Activated CD4-positive, alpha-beta memory T cell treated with anti-CD3 and anti-CD28 coated beads, Interleukin-2, amount 10 ng/mL, durations not matched to agents 7 days and 5 days (primary cell): ENCODE measurements at regions of chr19 and their contacts with region 1.

Region 1: DNA sequence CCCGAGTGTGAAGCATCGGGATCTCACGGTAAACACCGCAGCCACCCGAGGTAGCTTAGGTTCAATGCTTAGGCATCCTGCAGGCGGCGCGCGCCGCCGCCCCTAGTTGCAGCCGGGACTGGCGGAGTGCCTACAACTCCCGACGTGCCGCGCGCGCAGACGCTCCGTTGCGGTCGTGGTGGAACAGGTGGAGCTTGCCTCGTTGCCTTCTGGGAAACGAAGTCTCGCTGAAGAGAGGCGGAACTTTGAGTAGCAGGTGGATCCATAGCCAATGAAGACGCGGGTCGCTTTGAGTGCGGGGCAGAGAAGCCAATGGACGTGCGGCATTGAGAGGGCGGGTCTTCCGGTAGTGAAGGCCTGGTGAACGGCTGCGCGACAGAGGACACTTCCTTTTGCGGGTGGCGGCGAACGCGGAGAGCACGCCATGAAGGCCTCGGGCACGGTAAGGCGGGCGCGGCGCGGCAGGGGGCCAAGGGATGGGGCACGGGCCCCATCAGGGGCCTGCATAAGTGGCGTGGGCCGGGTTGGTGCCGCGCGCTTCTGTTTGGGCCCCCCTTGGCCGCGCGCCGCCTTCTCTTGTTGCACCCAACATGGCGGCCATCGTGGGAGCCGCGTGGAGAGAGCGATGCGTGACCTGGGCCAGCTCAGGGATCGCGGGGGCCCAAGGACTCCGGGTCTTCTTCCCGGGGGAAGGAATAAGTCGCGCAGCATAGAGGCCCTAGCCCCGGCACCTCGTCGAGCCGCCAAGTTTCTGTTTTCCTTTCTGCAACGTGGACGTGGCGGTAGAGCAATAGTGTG is at the start of gene RPL18A:
- DNase-seq: peak; percentile 100
- H3K4me3 Mint-ChIP-seq: peak within 1 kb of the TSS; percentile 95
- H3K27ac Mint-ChIP-seq: peak within 1 kb of the TSS; percentile 93
- H3K4me1 Mint-ChIP-seq: peaks cover 42% of the 10 kb centered on the region
- H3K27me3 Mint-ChIP-seq: no peaks in the 10 kb centered on the region
- total RNA-seq, gene RPL18A: 2,013 to 2,059 TPM

Region 2: DNA sequence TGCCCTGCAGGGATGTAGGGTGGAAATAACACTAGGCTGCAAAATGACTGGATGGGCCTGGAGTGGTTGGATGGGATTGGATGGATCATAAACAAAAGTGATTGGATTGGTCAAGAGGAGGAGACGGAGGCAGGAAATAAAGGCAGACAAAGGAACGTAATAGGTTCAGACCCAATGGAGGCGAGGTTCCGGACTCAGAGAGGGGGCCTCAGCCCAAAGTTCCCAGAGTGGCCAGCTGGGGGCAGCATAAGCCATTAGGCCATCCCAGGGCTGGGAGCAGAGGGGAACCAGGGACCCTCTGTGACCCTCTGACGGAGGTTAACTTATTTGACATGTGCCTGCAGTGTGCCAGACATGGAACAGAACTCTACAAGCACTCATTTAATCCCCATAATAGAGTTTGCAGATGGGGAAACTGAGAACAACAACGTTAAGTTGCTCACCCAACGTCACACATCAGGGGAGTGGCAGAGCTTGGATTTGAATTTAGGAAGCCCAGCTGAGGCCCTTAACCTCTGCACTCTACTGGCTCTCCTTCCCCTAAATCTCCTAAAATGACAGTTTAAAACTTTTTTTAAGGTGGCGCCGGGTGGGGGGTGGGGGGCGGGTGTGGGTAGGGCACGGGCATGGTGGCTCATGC is 155.8 kb before region 1 on chr19:
- CTCF ChIA-PET with region 1: interaction called, 41 read pairs
- POLR2A ChIA-PET with region 1: no interaction called
- DNase-seq: peak; percentile 74
- H3K4me3 Mint-ChIP-seq: no peak overlapping the region
- H3K27ac Mint-ChIP-seq: no peak overlapping the region
- H3K4me1 Mint-ChIP-seq: no peaks in the 10 kb centered on the region
- H3K27me3 Mint-ChIP-seq: peaks cover 7% of the 10 kb centered on the region

Region 3: GRCh38 chr19:17751103-17751911 is 108.4 kb before region 1 on chr19 and contains the start of gene FCHO1:
- CTCF ChIA-PET with region 1: interaction called, 12 read pairs
- POLR2A ChIA-PET with region 1: interaction called, 7 read pairs
- DNase-seq: peak; percentile 93
- H3K4me3 Mint-ChIP-seq: peak within 1 kb of the TSS; percentile 86
- H3K27ac Mint-ChIP-seq: peak within 1 kb of the TSS; percentile 83
- H3K4me1 Mint-ChIP-seq: peaks cover 65% of the 10 kb centered on the region
- H3K27me3 Mint-ChIP-seq: no peaks in the 10 kb centered on the region
- total RNA-seq, gene FCHO1: 64.8 to 76.7 TPM

Region 4: DNA sequence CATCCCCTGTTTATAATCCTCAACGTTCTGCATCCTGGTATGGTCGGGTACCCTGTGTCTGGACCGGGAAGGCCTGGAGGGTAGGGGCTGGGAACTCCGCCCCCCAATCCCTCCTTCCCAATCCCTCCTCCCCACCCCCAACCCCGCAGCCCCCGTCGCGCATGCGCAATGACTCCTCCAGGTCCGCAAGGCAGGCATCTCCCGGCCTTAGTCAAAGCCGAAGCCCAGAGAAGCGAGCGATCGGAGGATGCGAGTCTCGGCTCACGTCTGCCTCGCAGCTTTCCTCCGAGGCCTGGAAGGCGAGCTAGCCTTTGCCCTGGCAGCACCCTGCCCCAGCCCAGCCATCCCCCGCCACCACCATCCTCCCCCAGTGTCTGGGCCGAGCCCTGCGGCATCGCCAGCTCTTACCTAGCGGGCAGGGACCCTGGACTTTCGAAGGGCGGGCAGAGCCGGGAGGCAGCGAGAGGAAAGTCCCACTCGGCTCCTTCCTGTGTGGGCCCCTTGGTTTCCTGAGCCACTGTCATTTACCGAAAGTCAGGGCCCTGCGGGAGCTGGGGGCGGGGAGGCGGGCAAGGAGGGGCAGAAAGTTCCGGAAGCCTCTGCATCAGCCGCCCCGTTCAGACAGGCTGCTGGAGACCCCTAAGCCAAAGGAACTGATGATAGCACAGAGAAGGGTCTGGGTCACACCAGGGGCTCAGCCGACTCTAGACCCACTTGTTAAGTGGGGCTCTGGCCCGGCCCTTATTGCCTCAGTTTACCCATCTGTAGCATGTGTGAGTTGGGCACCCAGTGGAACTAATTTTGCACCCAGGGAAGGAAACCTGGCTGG is 12.0 kb before region 1 on chr19 and contains the start of gene JAK3:
- CTCF ChIA-PET with region 1: interaction called, 82 read pairs
- POLR2A ChIA-PET with region 1: interaction called, 93 read pairs
- DNase-seq: peak; percentile 91
- H3K4me3 Mint-ChIP-seq: peak within 1 kb of the TSS; percentile 94
- H3K27ac Mint-ChIP-seq: peak within 1 kb of the TSS; percentile 93
- H3K4me1 Mint-ChIP-seq: peaks cover 72% of the 10 kb centered on the region
- H3K27me3 Mint-ChIP-seq: no peaks in the 10 kb centered on the region
- total RNA-seq, gene JAK3: 233 to 237 TPM

Region 5: GRCh38 chr19:17883627-17884410 is 24.1 kb after region 1 on chr19:
- CTCF ChIA-PET with region 1: no interaction called
- POLR2A ChIA-PET with region 1: no interaction called
- DNase-seq: no peak
- H3K4me3 Mint-ChIP-seq: no peak overlapping the region
- H3K27ac Mint-ChIP-seq: no peak overlapping the region
- H3K4me1 Mint-ChIP-seq: no peaks in the 10 kb centered on the region
- H3K27me3 Mint-ChIP-seq: no peaks in the 10 kb centered on the region

Region 6: DNA sequence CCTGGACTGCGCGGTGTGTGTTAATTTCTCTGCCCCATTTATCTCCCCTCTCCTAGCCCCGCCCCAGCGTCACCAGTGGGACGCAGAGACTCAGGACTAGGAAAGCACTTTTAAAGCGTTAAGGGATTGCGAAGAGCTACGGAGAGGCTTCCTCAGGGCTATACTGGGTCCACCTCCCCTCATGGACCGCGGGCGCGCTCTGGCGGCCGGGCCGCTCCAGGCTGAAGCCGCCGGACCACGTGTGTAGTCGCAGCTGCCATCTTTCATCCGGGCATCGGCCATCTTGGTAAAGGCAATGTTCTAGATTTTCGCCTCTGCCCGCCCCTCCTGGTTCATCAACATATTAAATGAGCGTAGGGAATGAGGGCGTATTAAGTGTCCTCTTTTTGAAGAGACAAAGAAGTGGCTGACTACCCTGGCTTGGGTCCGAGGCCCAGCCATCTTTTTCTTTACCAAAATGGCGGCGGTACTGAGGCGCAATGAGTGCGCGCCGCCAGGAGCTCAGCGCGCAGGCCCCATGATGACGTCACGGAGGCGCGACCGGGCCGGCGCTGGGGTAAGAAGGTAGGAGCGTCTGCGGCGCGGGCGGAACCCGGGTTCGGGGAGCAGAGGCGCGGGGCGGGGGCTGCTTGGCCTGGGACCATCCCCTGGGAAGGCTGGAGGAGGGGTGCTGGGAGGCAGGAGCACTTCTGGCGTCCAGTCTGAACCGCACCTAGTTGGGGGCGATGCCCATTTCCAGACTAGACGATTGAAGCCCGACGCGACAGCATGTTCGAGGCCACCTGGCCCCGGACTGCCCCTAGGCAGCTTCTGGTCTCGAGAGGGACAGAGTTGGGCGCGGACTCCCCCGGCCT is 73.0 kb after region 1 on chr19 and contains the start of gene CCDC124:
- CTCF ChIA-PET with region 1: interaction called, 313 read pairs
- POLR2A ChIA-PET with region 1: interaction called, 131 read pairs
- DNase-seq: peak; percentile 95
- H3K4me3 Mint-ChIP-seq: peak within 1 kb of the TSS; percentile 81
- H3K27ac Mint-ChIP-seq: peak within 1 kb of the TSS; percentile 87
- H3K4me1 Mint-ChIP-seq: peaks cover 36% of the 10 kb centered on the region
- H3K27me3 Mint-ChIP-seq: no peaks in the 10 kb centered on the region
- total RNA-seq, gene CCDC124: 59.3 to 60.8 TPM

Region 7: GRCh38 chr19:17993076-17993813 is 133.5 kb after region 1 on chr19:
- CTCF ChIA-PET with region 1: interaction called, 12 read pairs
- POLR2A ChIA-PET with region 1: interaction called, 8 read pairs
- DNase-seq: no peak
- H3K4me3 Mint-ChIP-seq: no peak overlapping the region
- H3K27ac Mint-ChIP-seq: no peak overlapping the region
- H3K4me1 Mint-ChIP-seq: peaks cover 6% of the 10 kb centered on the region
- H3K27me3 Mint-ChIP-seq: peaks cover 4% of the 10 kb centered on the region